A549 (cell line): ENCODE measurements at regions of chr14 and their contacts with region 1.

Region 1: GRCh38 chr14:22556990-22557623 is 31.9 kb downstream of the DAD1 start:
- DNase-seq: peak; percentile 77 to 80
- ATAC-seq: peak; percentile 86 to 92
- H3K4me3 ChIP-seq: peak overlapping the region; percentile 23; the same call in 1 of the 3 replicates
- H3K27ac ChIP-seq: peak overlapping the region; percentile 81 to 87
- H3K4me1 ChIP-seq: peaks cover 6% of the 10 kb centered on the region; the same call in 1 of the 3 replicates
- CTCF ChIP-seq: peak; percentile 100
- EP300 ChIP-seq: no peak
- POLR2A ChIP-seq: no peak
- RAD21 ChIP-seq: peak; percentile 89 to 100

Region 2: GRCh38 chr14:22400655-22401259 is 156.3 kb before region 1 on chr14:
- CTCF ChIA-PET with region 1: no interaction called
- POLR2A ChIA-PET with region 1: no interaction called
- DNase-seq: no peak
- ATAC-seq: no peak
- H3K4me3 ChIP-seq: no peak overlapping the region
- H3K27ac ChIP-seq: no peak overlapping the region
- H3K4me1 ChIP-seq: no peaks in the 10 kb centered on the region
- CTCF ChIP-seq: no peak
- EP300 ChIP-seq: no peak
- POLR2A ChIP-seq: no peak
- RAD21 ChIP-seq: no peak

Region 3: DNA sequence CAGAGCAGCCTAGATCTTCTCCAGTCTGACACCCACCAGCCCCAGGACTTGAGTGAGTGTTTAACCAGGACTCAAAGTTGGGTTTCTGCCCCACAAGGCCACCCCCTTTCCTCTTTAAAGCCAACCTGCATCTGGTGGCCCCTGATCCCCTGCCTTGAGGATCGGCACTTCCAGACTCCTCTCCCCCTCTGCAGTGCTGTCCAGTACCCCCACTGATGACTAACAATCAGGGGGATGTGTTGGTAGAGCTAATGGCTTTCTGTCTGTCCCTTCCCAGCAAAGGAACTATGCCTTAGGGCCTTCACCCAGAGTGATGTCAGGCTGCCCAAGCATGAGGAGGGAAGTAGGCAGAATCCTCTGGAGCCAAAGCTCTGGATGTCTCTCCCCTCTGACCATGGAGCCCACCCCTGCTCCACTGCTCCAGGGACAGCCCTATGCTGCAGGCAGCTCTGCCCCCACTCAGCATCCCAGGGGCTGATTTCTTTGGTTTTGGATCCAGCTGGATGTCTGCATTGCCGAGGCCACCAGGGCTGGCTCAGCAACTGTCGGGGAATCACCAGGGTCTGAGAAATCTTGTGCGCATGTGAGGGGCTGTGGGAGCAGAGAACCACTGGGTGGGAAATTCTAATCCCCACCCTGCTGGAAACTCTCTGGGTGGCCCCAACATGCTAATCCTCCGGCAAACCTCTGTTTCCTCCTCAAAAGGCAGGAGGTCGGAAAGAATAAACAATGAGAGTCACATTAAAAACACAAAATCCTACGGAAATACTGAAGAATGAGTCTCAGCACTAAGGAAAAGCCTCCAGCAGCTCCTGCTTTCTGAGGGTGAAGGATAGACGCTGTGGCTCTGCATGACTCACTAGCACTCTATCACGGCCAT is 11.0 kb before region 1 on chr14:
- CTCF ChIA-PET with region 1: interaction called, 46 read pairs
- POLR2A ChIA-PET with region 1: no interaction called
- DNase-seq: no peak
- ATAC-seq: 0 out of 6 replicates have a peak, but pooled peaks of 1 of the 2 experiments have one; percentile 44
- H3K4me3 ChIP-seq: no peak overlapping the region
- H3K27ac ChIP-seq: no peak overlapping the region
- H3K4me1 ChIP-seq: no peaks in the 10 kb centered on the region
- CTCF ChIP-seq: no peak
- EP300 ChIP-seq: no peak
- POLR2A ChIP-seq: no peak
- RAD21 ChIP-seq: no peak

Region 4: DNA sequence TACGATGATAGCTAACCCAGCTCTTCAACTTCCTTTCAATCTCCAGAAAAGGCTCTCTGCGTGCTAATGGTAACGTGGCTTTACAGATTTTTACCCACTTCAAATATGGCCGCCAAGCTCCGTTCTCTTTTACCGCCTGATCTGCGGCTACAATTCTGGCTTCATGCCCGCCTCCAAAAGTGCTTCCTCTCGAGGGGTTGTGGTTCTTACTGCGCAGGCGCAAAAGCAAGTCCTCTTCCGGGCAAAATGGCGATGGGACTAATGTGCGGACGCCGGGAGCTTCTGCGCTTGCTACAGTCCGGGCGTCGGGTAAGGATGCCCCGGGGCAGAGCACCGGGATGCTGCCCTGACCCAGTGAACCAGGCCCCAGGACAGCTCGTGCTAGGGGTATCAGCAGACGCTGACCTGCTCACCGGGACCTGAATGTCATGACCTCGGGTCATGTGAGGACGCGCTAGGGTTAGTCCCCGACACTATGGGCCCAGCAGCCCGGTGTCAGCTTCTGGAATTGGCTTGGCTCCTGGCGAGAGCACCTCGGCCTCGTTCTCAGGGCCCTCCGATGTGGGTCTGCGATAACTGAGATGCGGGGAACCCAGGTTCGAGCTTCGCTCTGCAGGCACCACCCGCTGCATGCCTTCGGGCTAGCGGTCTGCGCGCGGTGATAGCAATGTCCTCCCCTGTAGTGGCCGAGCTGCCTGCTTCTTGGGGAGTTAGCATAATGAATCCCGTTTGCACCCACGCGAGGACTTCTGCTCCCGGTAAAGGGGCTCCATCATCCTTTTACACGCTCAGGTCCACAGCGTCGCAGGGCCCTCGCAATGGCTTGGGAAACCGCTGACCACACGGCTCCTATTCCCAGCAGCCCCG is 209.6 kb after region 1 on chr14 and contains the start of gene OXA1L:
- CTCF ChIA-PET with region 1: interaction called, 10 read pairs
- POLR2A ChIA-PET with region 1: interaction called, 5 read pairs
- DNase-seq: peak; percentile 92 to 97
- ATAC-seq: peak; percentile 91
- H3K4me3 ChIP-seq: peak within 1 kb of the TSS; percentile 66
- H3K27ac ChIP-seq: peak within 1 kb of the TSS; percentile 91 to 92
- H3K4me1 ChIP-seq: peaks cover 12% of the 10 kb centered on the region
- CTCF ChIP-seq: no peak
- EP300 ChIP-seq: no peak
- POLR2A ChIP-seq: peak; percentile 85
- RAD21 ChIP-seq: no peak
- polyA plus RNA-seq, gene OXA1L: 199 and 247 TPM in 2 replicates

Region 5: DNA sequence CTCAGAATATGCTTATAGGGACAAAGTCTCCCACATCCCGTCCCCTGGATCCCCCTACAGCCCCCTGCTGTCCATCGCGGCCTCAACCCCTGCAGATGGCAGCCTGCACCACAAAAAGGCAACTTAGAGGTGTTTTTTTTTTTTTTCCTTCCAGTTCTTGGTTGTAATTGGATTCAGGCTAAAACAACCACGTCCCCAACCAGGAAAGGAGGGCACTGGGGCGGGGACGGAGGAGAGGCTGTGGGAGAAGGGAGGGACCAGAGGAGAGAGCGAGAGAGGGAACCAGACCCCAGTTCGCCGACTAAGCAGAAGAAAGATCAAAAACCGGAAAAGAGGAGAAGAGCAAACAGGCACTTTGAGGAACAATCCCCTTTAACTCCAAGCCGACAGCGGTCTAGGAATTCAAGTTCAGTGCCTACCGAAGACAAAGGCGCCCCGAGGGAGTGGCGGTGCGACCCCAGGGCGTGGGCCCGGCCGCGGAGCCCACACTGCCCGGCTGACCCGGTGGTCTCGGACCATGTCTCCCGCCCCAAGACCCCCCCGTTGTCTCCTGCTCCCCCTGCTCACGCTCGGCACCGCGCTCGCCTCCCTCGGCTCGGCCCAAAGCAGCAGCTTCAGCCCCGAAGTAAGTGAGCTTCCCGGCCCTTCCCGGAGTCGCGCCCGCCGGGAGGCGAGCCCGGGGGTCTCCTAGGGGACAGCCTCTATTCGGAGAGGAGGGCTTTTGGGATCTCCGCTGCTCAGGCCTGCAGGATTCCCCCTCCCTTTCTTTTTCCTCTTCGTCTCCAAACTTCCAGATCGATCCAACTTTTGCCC is 279.4 kb after region 1 on chr14 and contains the start of gene MMP14:
- CTCF ChIA-PET with region 1: interaction called, 12 read pairs
- POLR2A ChIA-PET with region 1: no interaction called
- DNase-seq: no peak
- ATAC-seq: no peak
- H3K4me3 ChIP-seq: 0 out of 3 replicates have a peak within 1 kb of the TSS, but pooled peaks have one; percentile 18
- H3K27ac ChIP-seq: peak within 1 kb of the TSS in 1 of 2 experiments; percentile 38; a peak in 1 of 6 replicates
- H3K4me1 ChIP-seq: no peaks in the 10 kb centered on the region
- CTCF ChIP-seq: no peak
- EP300 ChIP-seq: no peak
- POLR2A ChIP-seq: no peak
- RAD21 ChIP-seq: no peak
- polyA plus RNA-seq, gene MMP14: 1.9 and 2.5 TPM in 2 replicates

Region 6: GRCh38 chr14:22872033-22872832 is 315.1 kb after region 1 on chr14:
- CTCF ChIA-PET with region 1: interaction called, 19 read pairs
- POLR2A ChIA-PET with region 1: no interaction called
- DNase-seq: peak; percentile 87 to 90
- ATAC-seq: peak; percentile 72 to 82
- H3K4me3 ChIP-seq: peak overlapping the region; percentile 78
- H3K27ac ChIP-seq: peak overlapping the region; percentile 94 to 98
- H3K4me1 ChIP-seq: peaks cover 21% of the 10 kb centered on the region
- CTCF ChIP-seq: peak; percentile 91
- EP300 ChIP-seq: no peak
- POLR2A ChIP-seq: 0 out of 2 replicates have a peak, but pooled peaks have one; percentile 24
- RAD21 ChIP-seq: peak; percentile 69 to 75

Region 7: GRCh38 chr14:22986508-22987054 is 429.5 kb after region 1 on chr14:
- CTCF ChIA-PET with region 1: interaction called, 28 read pairs
- POLR2A ChIA-PET with region 1: no interaction called
- DNase-seq: peak; percentile 78 to 88
- ATAC-seq: peak; percentile 51 to 59; a peak in 4 of 6 replicates
- H3K4me3 ChIP-seq: no peak overlapping the region
- H3K27ac ChIP-seq: no peak overlapping the region
- H3K4me1 ChIP-seq: peaks cover 7% of the 10 kb centered on the region; the same call in 1 of the 3 replicates
- CTCF ChIP-seq: peak; percentile 91
- EP300 ChIP-seq: no peak
- POLR2A ChIP-seq: no peak
- RAD21 ChIP-seq: peak; percentile 82 to 93